ENCODE measurements at regions of chr16 and their contacts with region 1.

Region 1: GRCh38 chr16:2500918-2501750 is 12.6 kb upstream of the ATP6V0C start:
- DNase-seq: peak; percentile 81 to 91 (median 84)
- ATAC-seq: peak; percentile 72 to 87 (median 83)
- H3K4me3 ChIP-seq: peak overlapping the region in 9 of 12 donors; percentile 9 to 56 (median 38)
- H3K27ac ChIP-seq: peak overlapping the region in 5 of 12 donors; percentile 42 to 64 (median 61)
- H3K4me1 ChIP-seq: peaks cover 0 to 65% (median 42%) of the 10 kb centered on the region in 12 donors
- H3K27me3 ChIP-seq: no peaks in the 10 kb centered on the region
- CTCF ChIP-seq: peak; percentile 97 to 100 (median 99)
- POLR2A ChIP-seq: no peak

Region 2: DNA sequence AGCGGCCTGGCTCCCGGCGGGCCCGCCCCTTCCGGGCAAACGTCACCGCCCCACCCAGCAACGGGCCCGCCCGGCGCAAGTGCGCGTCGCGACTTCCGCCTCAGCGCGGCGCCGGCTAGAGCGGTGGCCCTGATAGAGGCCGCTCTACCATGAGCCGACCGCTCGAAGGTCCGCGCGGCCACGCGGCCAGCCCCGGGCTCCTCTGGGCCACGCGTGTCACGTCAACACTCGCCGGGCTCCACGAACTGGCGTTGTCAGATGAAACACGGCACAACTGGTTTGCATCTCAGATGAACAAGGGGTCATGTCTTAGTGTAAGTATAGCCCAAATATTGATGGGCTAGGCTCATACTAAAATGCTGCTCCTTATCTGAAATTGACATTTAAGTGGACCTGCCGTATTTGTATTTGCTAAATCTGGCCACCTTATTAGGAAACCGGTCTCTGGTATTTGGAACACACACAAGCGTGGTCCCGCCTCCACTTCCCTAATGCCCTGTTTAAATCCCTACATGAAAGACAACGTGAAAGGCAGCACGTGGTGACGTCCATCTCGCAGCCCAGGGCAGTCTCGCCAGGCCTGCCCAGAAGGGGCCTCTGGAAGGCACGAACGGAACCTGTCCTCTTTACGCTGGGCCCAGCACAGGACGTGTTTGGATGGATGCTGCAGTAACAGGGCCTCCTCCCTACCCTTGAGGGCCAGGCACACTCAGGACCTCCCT is 491.2 kb before region 1 on chr16 and contains the start of gene ZNF598:
- intact Hi-C with region 1: loop called in 1 of 10 experiments (anchors 10 kb)
- DNase-seq: peak; percentile 87 to 91 (median 88)
- ATAC-seq: peak; percentile 90 to 97 (median 96)
- H3K4me3 ChIP-seq: peak within 1 kb of the TSS; percentile 69 to 100 (median 94)
- H3K27ac ChIP-seq: peak within 1 kb of the TSS; percentile 58 to 98 (median 93)
- H3K4me1 ChIP-seq: peaks cover 20 to 53% (median 38%) of the 10 kb centered on the region in 12 donors
- H3K27me3 ChIP-seq: no peaks in the 10 kb centered on the region
- CTCF ChIP-seq: peak in 2 of 12 donors; percentile 6 to 24
- POLR2A ChIP-seq: peak in 1 of 2 donors; percentile 92
- total RNA-seq, gene ZNF598: 10.9 to 47.4 (median 17.0) TPM

Region 3: GRCh38 chr16:2278272-2278608 is 222.9 kb before region 1 on chr16:
- intact Hi-C with region 1: loop called in 1 of 10 experiments (anchors 10 kb)
- DNase-seq: no peak
- ATAC-seq: no peak
- H3K4me3 ChIP-seq: no peak overlapping the region
- H3K27ac ChIP-seq: no peak overlapping the region
- H3K4me1 ChIP-seq: peaks cover 0 to 3% (median 0%) of the 10 kb centered on the region in 12 donors
- H3K27me3 ChIP-seq: no peaks in the 10 kb centered on the region
- CTCF ChIP-seq: no peak
- POLR2A ChIP-seq: no peak

Region 4: DNA sequence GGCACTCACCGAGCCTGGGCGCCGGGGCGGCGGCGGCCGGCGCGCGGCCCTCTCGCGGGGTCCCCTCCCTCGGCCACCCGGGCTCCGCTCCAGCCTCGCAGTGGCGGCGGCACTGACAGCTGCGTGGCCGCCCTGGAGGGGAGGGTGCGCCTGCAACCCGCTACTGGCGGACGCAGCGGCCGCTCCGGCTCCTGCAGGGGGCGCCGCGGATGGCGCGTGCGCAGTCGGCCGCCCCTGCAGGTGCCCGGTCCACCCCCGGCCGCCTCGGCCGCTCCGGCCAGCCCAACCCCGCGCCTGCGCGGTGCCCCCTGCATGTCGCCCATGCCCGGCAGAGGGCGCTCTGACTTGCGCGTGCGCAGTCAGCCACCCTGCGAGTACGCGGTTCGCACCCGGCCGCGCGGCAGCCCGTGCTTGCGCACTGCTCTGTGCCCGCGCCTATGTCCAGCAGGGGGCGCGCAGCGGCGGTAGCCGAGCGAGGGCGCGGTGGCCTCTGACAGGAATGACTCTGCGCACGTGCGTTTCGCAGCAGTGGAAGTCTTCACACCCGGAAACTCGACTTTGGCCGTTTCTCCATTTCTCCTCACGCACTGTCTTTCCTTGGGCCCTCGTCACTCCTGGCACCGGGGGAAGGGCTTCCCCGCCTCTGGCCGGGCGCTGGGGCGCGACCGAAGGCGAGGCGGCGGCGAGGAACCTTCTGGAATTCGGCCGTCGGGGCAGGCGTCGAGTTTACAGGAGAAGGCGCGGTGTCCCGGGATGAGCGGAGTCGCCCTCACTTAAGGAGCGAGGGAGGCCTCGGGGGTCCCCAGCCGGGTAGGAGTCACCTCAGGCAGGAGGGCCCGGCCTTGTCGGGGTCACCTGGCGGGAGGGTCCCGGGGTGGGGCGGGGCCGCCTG is 160.3 kb before region 1 on chr16 and contains the start of gene ABCA3:
- intact Hi-C with region 1: loop called (anchors 1 to 5 kb)
- DNase-seq: peak; percentile 92 to 97 (median 93)
- ATAC-seq: peak; percentile 95 to 97 (median 96)
- H3K4me3 ChIP-seq: peak within 1 kb of the TSS; percentile 70 to 96 (median 82)
- H3K27ac ChIP-seq: peak within 1 kb of the TSS in 9 of 12 donors; percentile 14 to 73 (median 61)
- H3K4me1 ChIP-seq: peaks cover 0 to 24% (median 14%) of the 10 kb centered on the region in 12 donors
- H3K27me3 ChIP-seq: peaks cover 0 to 4% (median 0%) of the 10 kb centered on the region in 9 donors
- CTCF ChIP-seq: peak in 11 of 12 donors; percentile 99 to 100 (median 100)
- POLR2A ChIP-seq: peak in 1 of 2 donors; percentile 68
- total RNA-seq, gene ABCA3: 8.0 to 16.5 (median 10.0) TPM

Region 5: DNA sequence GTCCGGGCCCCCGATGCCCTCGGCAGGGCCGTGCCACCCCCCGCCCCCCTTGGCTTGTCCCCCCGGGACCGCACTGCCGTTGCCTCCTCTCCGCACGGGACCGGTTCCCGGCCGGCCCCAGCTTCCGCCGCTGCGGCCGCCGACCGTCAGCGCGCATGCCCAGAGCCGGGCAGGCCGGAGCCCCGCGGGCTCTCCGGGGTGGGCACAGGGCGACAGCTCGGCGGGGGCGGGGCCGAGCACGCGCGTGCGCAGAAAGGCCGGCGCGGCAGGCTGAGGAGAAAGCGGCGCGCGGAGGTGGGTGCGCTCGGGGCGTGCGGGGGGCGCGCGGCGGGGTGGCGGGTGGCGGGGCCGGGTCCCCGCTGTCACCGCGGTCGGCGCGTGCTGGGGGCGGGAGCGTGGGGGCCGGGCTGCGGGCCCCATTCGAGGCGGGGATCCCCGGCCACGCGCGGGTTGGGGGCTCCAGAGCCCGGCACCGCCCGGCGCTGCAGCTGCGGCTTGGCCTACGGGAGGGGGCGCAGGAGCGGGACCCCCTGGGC is 26.2 kb before region 1 on chr16 and contains the start of gene TBC1D24:
- intact Hi-C with region 1: loop called in 2 of 10 experiments (anchors 2 kb)
- DNase-seq: peak; percentile 88 to 95 (median 90)
- ATAC-seq: peak; percentile 80 to 93 (median 93)
- H3K4me3 ChIP-seq: peak within 1 kb of the TSS; percentile 62 to 87 (median 77)
- H3K27ac ChIP-seq: peak within 1 kb of the TSS; percentile 13 to 95 (median 88)
- H3K4me1 ChIP-seq: peaks cover 9 to 48% (median 28%) of the 10 kb centered on the region in 12 donors
- H3K27me3 ChIP-seq: peaks cover 11 to 36% (median 28%) of the 10 kb centered on the region in 9 donors
- CTCF ChIP-seq: no peak
- POLR2A ChIP-seq: peak in 1 of 2 donors; percentile 82
- total RNA-seq, gene TBC1D24: 8.9 to 19.2 (median 11.9) TPM